Activated CD4-positive, alpha-beta memory T cell treated with anti-CD3 and anti-CD28 coated beads, Interleukin-2, amount 10 ng/mL, durations not matched to agents 7 days and 5 days (primary cell): ENCODE measurements at regions of chr3 and their contacts with region 1.

Region 1: DNA sequence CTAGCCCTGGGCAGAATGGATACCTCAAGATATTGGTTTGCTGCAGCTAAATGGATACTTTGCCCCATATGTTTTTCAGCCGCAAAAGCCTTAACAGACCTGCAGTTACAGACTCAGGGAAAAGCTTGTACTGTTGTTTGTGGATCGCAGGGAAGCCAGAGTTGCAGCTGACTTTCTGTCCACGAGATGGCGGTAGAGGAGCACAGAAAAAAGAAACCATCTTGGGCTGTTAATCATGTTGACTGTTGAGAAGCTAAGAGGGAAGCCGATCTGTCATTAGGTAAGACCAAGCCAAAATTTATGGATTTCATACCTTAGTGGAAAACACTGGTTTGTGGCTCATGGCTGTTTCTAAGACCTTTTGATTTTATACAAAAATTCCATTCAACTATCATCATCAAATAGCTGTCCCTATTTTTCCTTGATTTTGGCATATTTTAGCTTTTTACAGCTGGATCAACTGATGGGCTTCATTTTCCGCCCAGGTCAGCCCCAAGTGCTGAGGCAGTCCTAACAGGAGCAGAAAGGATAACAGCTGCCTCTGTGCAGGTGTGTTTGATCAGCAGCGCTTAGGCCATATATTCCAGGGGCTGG is 205.7 kb upstream of the ZPLD1 start:
- DNase-seq: peak; percentile 79
- H3K4me3 Mint-ChIP-seq: no peak overlapping the region
- H3K27ac Mint-ChIP-seq: no peak overlapping the region
- H3K4me1 Mint-ChIP-seq: peaks cover 19% of the 10 kb centered on the region
- H3K27me3 Mint-ChIP-seq: peaks cover 16% of the 10 kb centered on the region

Region 2: DNA sequence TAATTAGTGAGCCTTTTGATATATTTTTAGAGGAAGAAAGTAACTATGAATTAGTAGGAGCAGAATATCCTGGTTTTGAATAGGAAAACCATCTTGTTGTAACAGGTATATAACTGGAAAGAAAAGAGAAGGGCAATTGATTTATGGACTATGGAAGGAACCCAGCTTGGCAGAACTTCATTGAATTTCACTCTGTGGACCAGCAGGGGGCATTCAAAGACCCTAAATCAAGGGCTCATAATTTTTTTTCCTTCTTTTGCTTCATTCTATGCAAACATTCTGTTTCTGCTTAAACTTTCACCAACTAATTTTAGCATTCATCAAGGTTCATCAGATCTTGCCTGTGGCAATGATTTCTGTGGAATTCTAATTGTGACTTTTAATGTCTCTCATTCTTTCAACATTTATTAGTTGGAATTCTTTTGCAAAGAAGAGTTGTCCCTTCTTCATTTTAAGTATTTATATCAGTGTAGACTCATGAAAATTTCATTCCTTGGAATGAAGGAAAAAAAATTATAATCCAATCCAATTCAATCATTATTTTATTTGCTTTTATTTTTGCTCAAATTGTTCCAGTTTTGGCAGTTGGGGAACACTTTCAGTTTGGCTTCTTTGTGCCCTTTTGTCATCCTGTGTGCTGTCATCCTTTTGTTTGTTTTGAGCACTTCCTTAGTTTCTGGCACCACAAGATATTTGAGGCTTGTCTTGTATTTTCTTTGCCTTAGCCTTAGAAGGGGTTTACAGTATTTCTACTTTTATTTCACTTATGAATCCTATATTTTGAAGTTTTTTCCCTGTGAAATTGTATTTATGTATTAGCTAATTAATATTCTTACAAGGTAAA is 419.8 kb before region 1 on chr3:
- CTCF ChIA-PET with region 1: interaction called, 215 read pairs
- POLR2A ChIA-PET with region 1: interaction called, 18 read pairs
- DNase-seq: no peak
- H3K4me3 Mint-ChIP-seq: no peak overlapping the region
- H3K27ac Mint-ChIP-seq: no peak overlapping the region
- H3K4me1 Mint-ChIP-seq: peaks cover 59% of the 10 kb centered on the region
- H3K27me3 Mint-ChIP-seq: no peaks in the 10 kb centered on the region

Region 3: DNA sequence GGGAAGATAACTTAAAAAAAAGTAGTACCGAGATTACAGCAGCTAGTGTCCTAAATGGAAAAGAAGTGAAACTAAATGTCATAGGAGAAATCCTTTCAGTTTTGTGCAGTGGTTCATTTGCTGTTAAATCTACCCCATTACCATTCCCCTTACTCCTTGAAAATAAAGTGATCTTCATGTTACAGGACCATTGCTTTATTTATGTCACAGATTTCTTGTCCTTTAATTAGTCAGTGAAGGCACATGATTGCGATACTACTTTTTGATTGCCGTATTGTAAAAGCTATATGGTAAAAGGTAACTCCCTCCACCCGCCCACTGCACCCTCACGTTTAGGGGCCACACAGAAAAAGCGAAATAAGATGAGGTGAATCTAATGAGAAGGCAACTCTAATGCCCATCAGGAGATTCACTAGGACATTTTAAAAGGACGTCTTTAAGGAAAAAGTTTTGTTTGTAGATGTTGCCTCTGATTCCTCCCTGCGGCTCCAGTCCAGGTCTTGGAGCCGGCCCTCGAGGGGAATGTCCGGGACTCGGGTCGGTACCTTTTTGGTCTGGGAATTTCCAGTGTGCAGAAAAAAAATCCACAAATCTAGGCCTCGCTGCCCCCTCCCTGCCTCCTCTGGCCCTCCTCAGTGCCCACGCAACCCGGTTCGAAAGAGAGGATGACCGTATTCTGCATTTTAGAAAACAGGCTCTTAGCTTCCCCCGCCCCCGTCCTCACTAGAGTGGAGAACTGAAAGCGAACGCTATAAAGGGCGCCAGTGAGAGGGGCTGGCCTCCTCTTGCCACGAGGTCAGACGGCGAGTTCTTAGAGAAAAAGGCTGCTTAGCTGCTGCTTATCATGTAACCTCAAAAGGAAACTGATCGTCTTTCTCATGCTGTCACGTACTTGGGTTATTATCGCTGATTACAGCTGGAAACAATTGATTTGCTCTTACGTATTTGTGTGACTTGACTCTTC is 401.7 kb before region 1 on chr3:
- CTCF ChIA-PET with region 1: interaction called, 36 read pairs
- POLR2A ChIA-PET with region 1: interaction called, 6 read pairs
- DNase-seq: peak; percentile 83
- H3K4me3 Mint-ChIP-seq: peak overlapping the region; percentile 82
- H3K27ac Mint-ChIP-seq: peak overlapping the region; percentile 90
- H3K4me1 Mint-ChIP-seq: peaks cover 53% of the 10 kb centered on the region
- H3K27me3 Mint-ChIP-seq: no peaks in the 10 kb centered on the region

Region 4: GRCh38 chr3:102536456-102536855 is 307.3 kb after region 1 on chr3:
- CTCF ChIA-PET with region 1: interaction called, 122 read pairs
- POLR2A ChIA-PET with region 1: interaction called, 6 read pairs
- DNase-seq: no peak
- H3K4me3 Mint-ChIP-seq: no peak overlapping the region
- H3K27ac Mint-ChIP-seq: no peak overlapping the region
- H3K4me1 Mint-ChIP-seq: peaks cover 4% of the 10 kb centered on the region
- H3K27me3 Mint-ChIP-seq: peaks cover 6% of the 10 kb centered on the region